ENCODE measurements at regions of chr7 and their contacts with region 1.

Region 1: DNA sequence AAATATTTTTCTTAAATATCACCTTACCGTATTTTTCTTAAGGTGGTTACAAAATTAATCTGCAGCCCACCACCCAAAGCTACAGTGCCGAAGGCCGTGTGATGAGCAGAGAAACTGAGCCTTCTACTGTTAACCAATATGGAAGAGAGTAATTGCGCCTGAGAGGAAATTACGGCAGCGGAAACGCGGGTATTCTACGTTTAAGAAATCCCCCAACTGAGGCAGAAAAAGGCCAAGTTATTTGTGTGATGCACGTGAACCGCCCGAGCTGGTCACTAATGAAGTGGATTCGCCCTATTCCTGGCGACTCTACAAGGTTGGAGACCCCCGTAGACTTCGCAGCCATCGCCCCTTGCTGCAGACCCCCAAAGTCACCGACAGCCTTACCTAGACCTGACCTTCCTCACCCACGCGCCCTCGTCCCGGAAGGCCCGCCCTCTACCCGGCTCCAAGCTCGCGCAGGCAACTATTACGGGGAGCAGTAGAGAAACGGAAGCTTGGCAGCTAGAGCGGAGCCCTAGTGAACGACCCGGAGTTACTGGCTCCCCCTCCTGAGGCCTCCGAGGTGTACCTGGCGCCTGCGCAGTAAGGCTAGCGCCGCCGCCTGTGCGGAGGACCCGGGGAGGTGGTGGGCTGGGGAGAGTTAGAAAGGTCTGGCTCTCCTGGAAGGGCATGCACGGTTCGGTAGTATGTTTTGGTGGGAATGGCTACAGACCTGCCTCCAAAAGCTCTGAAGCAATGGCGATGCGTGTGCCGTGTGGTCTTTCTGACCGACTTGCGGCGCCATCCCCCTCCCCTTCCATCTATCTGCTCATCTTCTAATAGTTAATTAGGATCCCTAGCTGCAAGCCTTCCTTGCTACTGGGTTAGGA is at the start of gene MRPS33:
- DNase-seq: peak; percentile 88
- ATAC-seq: peak; percentile 97
- H3K4me3 Mint-ChIP-seq: peak within 1 kb of the TSS; percentile 98
- H3K27ac Mint-ChIP-seq: peak within 1 kb of the TSS; percentile 99
- H3K4me1 Mint-ChIP-seq: peaks cover 32% of the 10 kb centered on the region
- H3K27me3 Mint-ChIP-seq: peaks cover 15% of the 10 kb centered on the region
- total RNA-seq, gene MRPS33: 44.4 to 47.0 TPM

Region 2: GRCh38 chr7:140479062-140479738 is 535.6 kb before region 1 on chr7 and contains the start of gene MKRN1:
- POLR2A ChIA-PET with region 1: interaction called, 24 read pairs
- DNase-seq: peak; percentile 93
- ATAC-seq: peak; percentile 95
- H3K4me3 Mint-ChIP-seq: peak within 1 kb of the TSS; percentile 100
- H3K27ac Mint-ChIP-seq: peak within 1 kb of the TSS; percentile 100
- H3K4me1 Mint-ChIP-seq: peaks cover 15% of the 10 kb centered on the region
- H3K27me3 Mint-ChIP-seq: peaks cover 4% of the 10 kb centered on the region
- total RNA-seq, gene MKRN1: 97.2 to 105 TPM

Region 3: GRCh38 chr7:140924019-140924820 is 90.5 kb before region 1 on chr7:
- POLR2A ChIA-PET with region 1: interaction called, 17 read pairs
- DNase-seq: peak; percentile 85
- ATAC-seq: peak; percentile 76
- H3K4me3 Mint-ChIP-seq: no peak overlapping the region
- H3K27ac Mint-ChIP-seq: no peak overlapping the region
- H3K4me1 Mint-ChIP-seq: peaks cover 12% of the 10 kb centered on the region
- H3K27me3 Mint-ChIP-seq: no peaks in the 10 kb centered on the region

Region 4: DNA sequence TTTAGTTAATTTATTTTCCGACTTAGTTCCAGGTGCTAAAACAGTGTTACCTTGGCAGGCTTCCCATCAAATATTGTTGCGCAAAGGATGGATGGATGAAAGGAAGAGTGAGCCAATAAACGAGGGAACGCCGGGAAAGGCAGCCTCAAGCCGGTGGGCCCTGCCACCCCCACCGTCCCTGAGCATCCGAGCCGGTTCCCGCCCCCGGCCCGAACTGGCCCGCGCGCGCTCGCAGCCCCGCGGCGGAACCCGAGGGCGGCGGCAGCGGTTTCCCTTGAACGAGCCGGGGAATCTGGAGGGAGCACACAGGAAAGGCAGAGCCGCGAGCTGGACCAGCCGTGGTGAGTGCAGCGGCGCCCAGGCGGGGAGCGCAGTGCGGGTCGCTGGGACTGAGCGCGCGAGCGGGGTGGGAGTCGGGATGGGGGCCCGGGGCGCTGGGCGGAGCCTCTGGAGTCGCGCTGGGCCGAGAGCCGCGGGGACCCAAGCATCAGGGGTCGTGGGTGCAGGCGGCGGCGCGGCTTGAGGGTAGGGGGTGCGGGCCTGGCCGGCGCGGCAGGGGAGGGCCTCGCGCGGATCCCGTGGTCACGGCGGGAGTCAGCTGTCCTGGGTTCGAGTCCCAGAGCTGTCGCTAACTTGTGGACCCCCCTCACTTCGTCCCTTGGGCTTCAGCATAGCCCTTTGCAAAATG is 536.5 kb after region 1 on chr7 and contains the start of gene AGK:
- POLR2A ChIA-PET with region 1: interaction called, 11 read pairs
- DNase-seq: peak; percentile 88
- ATAC-seq: peak; percentile 96
- H3K4me3 Mint-ChIP-seq: peak within 1 kb of the TSS; percentile 89
- H3K27ac Mint-ChIP-seq: peak within 1 kb of the TSS; percentile 88
- H3K4me1 Mint-ChIP-seq: peaks cover 31% of the 10 kb centered on the region
- H3K27me3 Mint-ChIP-seq: peaks cover 2% of the 10 kb centered on the region
- total RNA-seq, gene AGK: 39.9 to 40.3 TPM

Region 5: DNA sequence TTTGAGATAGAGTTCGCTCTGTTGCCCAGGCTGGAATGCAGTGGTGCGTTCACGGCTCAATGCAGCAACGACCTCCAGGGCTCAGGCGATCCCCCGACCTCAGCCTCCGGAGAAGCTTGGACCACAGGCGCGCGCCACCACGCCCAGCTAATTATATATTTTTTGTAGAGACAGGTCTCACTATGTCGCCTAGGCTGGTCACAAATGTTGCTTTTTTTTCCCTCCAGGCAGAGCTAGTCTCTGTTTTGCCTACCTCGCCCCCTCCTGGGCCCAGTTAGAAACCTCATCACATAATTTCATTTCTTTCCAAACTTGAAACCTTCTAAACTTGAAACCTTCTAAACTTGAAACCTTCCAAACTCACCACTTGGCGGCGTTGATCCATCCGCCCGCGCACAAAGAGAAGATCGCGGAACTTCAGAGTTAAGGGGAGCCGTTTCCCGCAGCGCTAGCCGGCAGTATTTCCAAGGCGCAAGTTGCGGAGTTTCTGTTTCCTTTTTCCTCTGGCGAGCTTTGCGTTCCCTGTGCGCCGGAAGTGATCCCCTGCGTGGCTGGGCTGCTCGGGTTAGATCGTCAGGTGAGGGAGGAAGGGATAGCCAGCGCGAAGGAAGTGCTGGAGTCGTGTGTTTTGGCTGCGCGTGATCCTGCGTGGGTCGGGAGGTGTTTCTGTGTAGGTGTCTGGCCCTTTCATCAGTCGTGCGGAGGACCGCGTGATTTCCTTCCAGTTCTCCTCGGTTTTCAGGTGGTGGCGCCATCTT is 723.3 kb after region 1 on chr7 and contains the start of gene SSBP1:
- POLR2A ChIA-PET with region 1: interaction called, 13 read pairs
- DNase-seq: peak; percentile 87
- ATAC-seq: peak; percentile 91
- H3K4me3 Mint-ChIP-seq: peak within 1 kb of the TSS; percentile 94
- H3K27ac Mint-ChIP-seq: peak within 1 kb of the TSS; percentile 96
- H3K4me1 Mint-ChIP-seq: peaks cover 21% of the 10 kb centered on the region
- H3K27me3 Mint-ChIP-seq: no peaks in the 10 kb centered on the region
- total RNA-seq, gene SSBP1: 106 to 117 TPM

Measured in activated naive CD8-positive, alpha-beta T cell treated with anti-CD3 and anti-CD28 coated beads, Interleukin-2, amount 10 ng/mL, durations not matched to agents 7 days and 5 days (primary cell).